ENCODE measurements at regions of chr18 and their contacts with region 1.

Region 1: GRCh38 chr18:23194155-23194996 is 59.1 kb downstream of the CABLES1 start:
- DNase-seq: no peak
- H3K4me3 ChIP-seq: no peak overlapping the region
- H3K27ac ChIP-seq: peak overlapping the region; percentile 0 to 61 (median 40)
- H3K4me1 ChIP-seq: peaks cover 0 to 10% (median 4%) of the 10 kb centered on the region in 4 donors
- H3K27me3 ChIP-seq: no peaks in the 10 kb centered on the region
- CTCF ChIP-seq: no peak
- EP300 ChIP-seq: no peak
- POLR2A ChIP-seq: no peak

Region 2: GRCh38 chr18:23012249-23012648 is 182.1 kb before region 1 on chr18:
- intact Hi-C with region 1: no loop called
- DNase-seq: no peak
- H3K4me3 ChIP-seq: no peak overlapping the region
- H3K27ac ChIP-seq: no peak overlapping the region
- H3K4me1 ChIP-seq: no peaks in the 10 kb centered on the region
- H3K27me3 ChIP-seq: no peaks in the 10 kb centered on the region
- CTCF ChIP-seq: no peak
- EP300 ChIP-seq: no peak
- POLR2A ChIP-seq: no peak

Region 3: GRCh38 chr18:23183411-23184155 is 10.8 kb before region 1 on chr18:
- intact Hi-C with region 1: loop called (anchors 1 kb)
- DNase-seq: no peak
- H3K4me3 ChIP-seq: no peak overlapping the region
- H3K27ac ChIP-seq: no peak overlapping the region
- H3K4me1 ChIP-seq: peaks cover 0 to 14% (median 9%) of the 10 kb centered on the region in 4 donors
- H3K27me3 ChIP-seq: no peaks in the 10 kb centered on the region
- CTCF ChIP-seq: no peak
- EP300 ChIP-seq: no peak
- POLR2A ChIP-seq: no peak

Region 4: GRCh38 chr18:23337599-23338444 is 143.4 kb after region 1 on chr18:
- intact Hi-C with region 1: loop called (anchors 5 kb)
- DNase-seq: no peak
- H3K4me3 ChIP-seq: no peak overlapping the region
- H3K27ac ChIP-seq: no peak overlapping the region
- H3K4me1 ChIP-seq: no peaks in the 10 kb centered on the region
- H3K27me3 ChIP-seq: no peaks in the 10 kb centered on the region
- CTCF ChIP-seq: no peak
- EP300 ChIP-seq: no peak
- POLR2A ChIP-seq: no peak

Measured in sigmoid colon (tissue), 7 donors.